ENCODE measurements at regions of chr1 and their contacts with region 1.

Region 1: GRCh38 chr1:66696771-66697170 is 55.5 kb upstream of the DYNLT5 start:
- DNase-seq: no peak
- H3K4me3 ChIP-seq: no peak overlapping the region
- H3K27ac ChIP-seq: no peak overlapping the region
- H3K4me1 ChIP-seq: no peaks in the 10 kb centered on the region
- H3K27me3 ChIP-seq: no peaks in the 10 kb centered on the region
- CTCF ChIP-seq: no peak
- POLR2A ChIP-seq: no peak

Region 2: DNA sequence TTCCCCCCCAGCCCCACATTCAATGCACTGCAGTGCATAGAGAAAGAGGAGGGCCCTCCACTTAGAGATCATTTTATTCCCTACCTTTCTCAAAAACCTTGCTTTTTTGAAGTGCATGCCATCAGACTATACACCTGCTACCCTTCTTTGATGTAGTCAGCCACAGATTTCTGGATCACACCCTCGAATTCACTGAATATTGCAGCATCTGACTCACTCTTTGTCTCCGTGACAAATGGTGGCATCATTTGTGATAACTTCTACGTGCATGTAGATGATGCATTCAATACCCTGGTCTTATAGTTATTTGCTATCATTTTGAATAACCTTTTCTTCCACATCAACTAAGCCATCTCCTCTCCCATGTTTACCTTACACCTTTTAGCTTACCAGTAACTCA is 473.1 kb before region 1 on chr1:
- intact Hi-C with region 1: no loop called
- DNase-seq: no peak
- H3K4me3 ChIP-seq: no peak overlapping the region
- H3K27ac ChIP-seq: no peak overlapping the region
- H3K4me1 ChIP-seq: no peaks in the 10 kb centered on the region
- H3K27me3 ChIP-seq: no peaks in the 10 kb centered on the region
- CTCF ChIP-seq: no peak
- POLR2A ChIP-seq: no peak

Region 3: DNA sequence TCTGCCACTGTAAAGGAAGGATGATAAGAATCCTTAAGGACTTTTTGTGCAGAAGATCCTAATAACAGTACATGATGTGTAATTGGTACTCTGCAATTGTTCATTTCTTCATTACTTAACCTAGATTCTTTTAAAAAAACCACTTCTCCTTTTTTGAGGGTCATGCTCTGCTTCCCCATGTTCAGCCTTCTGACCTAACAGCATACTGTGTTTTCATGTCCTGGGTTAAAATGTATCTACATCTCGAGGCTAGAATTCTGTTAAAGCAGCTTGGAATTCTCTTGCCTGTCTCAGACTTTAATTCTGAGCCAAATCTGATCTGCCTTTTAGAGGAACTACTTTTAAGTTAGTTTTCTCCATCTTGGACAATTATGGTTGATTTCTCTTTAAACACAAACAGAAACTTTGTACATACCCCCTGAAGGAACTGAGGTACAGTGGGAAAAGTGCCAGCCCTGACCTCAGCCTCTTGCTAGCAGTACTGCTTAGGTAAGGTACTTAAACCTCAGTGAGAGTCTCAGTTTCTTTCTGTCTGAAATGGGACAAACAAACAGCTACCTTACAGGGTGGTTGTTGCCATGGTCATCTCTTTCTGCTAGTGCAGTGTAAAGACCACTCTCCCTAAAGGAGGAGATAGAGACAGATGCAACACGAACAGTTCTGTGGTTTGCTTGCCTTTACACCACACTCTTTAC is 47.7 kb before region 1 on chr1:
- intact Hi-C with region 1: no loop called
- DNase-seq: no peak
- H3K4me3 ChIP-seq: no peak overlapping the region
- H3K27ac ChIP-seq: no peak overlapping the region
- H3K4me1 ChIP-seq: no peaks in the 10 kb centered on the region
- H3K27me3 ChIP-seq: no peaks in the 10 kb centered on the region
- CTCF ChIP-seq: no peak
- POLR2A ChIP-seq: no peak

Region 4: DNA sequence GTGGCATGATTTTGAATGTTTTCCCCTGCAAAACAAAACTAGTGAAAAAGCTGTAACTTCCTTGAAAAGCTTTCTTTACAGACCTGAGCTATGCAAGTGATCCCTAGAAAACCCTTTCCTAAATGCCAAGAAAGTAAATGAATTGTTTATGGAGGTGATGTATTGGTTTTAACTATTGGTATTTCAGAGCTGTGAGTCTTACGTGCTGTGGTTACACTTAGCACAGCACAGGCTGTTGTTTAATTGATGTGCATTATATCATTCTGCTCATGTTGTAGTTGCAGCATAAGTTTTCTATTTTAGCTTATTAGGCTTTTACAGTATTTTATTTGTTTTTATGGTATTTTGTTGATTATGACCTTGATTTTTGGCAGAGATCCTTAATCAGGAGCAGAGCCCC is 18.6 kb before region 1 on chr1:
- intact Hi-C with region 1: loop called (anchors 2 kb)
- DNase-seq: no peak
- H3K4me3 ChIP-seq: no peak overlapping the region
- H3K27ac ChIP-seq: no peak overlapping the region
- H3K4me1 ChIP-seq: no peaks in the 10 kb centered on the region
- H3K27me3 ChIP-seq: no peaks in the 10 kb centered on the region
- CTCF ChIP-seq: no peak
- POLR2A ChIP-seq: no peak

Measured in breast epithelium (tissue), 4 donors.